ENCODE measurements at regions of chr3 and their contacts with region 1.

Region 1: DNA sequence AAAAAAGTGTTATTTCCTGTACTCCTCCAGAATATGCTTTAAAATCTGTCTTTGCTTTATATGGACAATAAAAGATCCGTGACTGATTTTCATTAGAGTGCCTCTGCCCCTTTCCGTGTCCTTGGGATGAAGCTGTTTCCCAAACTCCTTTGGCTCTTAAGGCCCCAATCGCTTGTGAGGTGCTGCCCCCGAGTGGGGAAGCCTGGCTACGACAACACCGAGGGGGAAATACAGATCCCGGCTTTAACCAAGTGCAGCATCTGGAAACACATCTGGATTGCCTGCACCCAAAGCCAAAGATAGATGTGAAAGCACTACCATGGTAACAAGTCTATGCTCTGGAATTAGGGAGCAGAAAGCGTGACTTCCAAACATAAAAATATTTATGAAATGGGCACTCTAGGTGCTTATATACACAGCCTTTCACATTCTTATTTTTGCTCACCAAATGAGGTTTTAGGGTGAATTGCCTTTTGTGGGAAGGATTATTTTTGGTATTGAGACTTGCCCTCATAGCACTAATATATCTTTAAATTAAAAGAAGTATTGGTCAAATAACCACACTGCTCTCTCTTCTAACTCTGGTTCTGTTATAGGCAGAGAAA is 40.6 kb upstream of the ADCY5 start:
- DNase-seq: peak; percentile 60 to 68
- ATAC-seq: peak; percentile 81 to 88
- H3K4me3 ChIP-seq: no peak overlapping the region
- H3K27ac ChIP-seq: no peak overlapping the region
- H3K4me1 ChIP-seq: no peaks in the 10 kb centered on the region
- CTCF ChIP-seq: peak; percentile 87
- EP300 ChIP-seq: no peak
- POLR2A ChIP-seq: no peak
- RAD21 ChIP-seq: peak; percentile 92 to 94

Region 2: GRCh38 chr3:123008840-123009239 is 480.7 kb before region 1 on chr3:
- CTCF ChIA-PET with region 1: no interaction called
- POLR2A ChIA-PET with region 1: no interaction called
- DNase-seq: no peak
- ATAC-seq: no peak
- H3K4me3 ChIP-seq: no peak overlapping the region
- H3K27ac ChIP-seq: no peak overlapping the region
- H3K4me1 ChIP-seq: no peaks in the 10 kb centered on the region
- CTCF ChIP-seq: no peak
- EP300 ChIP-seq: no peak
- POLR2A ChIP-seq: no peak
- RAD21 ChIP-seq: no peak

Region 3: DNA sequence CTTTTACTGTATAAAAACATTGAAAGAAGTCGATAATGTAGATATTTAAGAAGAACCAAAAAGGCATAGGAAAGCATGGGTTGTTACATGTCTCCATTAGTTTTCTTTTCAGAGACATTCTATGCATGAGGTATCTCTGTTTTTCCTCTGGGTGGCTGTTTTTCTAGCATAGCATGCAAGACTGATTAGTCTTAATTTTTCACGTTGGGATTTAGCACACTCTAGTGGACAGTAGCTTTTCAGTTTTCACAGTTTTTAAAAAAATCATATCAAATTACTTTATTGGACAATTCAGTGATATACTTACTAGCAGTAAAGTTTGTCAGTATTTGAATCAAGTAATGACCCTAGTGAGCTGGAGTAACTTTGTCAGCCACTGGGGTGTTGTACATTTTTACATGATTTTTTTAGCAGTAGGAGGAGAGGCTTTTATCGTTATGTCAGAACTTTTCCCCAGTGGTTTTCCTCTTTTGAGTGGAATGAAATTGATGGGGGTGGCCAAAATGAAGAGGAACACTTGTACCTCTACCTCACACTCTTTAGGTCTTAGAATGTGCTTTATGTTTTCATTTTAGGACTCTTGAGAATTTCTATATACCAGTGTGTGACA is 230.6 kb before region 1 on chr3:
- CTCF ChIA-PET with region 1: no interaction called
- POLR2A ChIA-PET with region 1: no interaction called
- DNase-seq: peak; percentile 22 to 65
- ATAC-seq: peak; percentile 93 to 95
- H3K4me3 ChIP-seq: no peak overlapping the region
- H3K27ac ChIP-seq: no peak overlapping the region
- H3K4me1 ChIP-seq: no peaks in the 10 kb centered on the region
- CTCF ChIP-seq: peak; percentile 85
- EP300 ChIP-seq: no peak
- POLR2A ChIP-seq: no peak
- RAD21 ChIP-seq: peak; percentile 73 to 74

Region 4: GRCh38 chr3:123459881-123460280 is 29.6 kb before region 1 on chr3:
- CTCF ChIA-PET with region 1: interaction called, 10 read pairs
- POLR2A ChIA-PET with region 1: no interaction called
- DNase-seq: no peak
- ATAC-seq: peak; percentile 43 to 53; a peak in 4 of 6 replicates
- H3K4me3 ChIP-seq: no peak overlapping the region
- H3K27ac ChIP-seq: no peak overlapping the region
- H3K4me1 ChIP-seq: no peaks in the 10 kb centered on the region
- CTCF ChIP-seq: no peak
- EP300 ChIP-seq: no peak
- POLR2A ChIP-seq: no peak
- RAD21 ChIP-seq: no peak

Region 5: GRCh38 chr3:123733805-123734526 is 244.5 kb after region 1 on chr3:
- CTCF ChIA-PET with region 1: no interaction called
- POLR2A ChIA-PET with region 1: no interaction called
- DNase-seq: peak; percentile 23 to 63
- ATAC-seq: peak; percentile 64 to 67; a peak in 5 of 6 replicates
- H3K4me3 ChIP-seq: no peak overlapping the region
- H3K27ac ChIP-seq: peak overlapping the region; percentile 71 to 85
- H3K4me1 ChIP-seq: peaks cover 50% of the 10 kb centered on the region
- CTCF ChIP-seq: no peak
- EP300 ChIP-seq: no peak
- POLR2A ChIP-seq: no peak
- RAD21 ChIP-seq: no peak

Measured in A549 (cell line).